Colonic mucosa (tissue), 4 donors: ENCODE measurements at regions of chr11 and their contacts with region 1.

Region 1: DNA sequence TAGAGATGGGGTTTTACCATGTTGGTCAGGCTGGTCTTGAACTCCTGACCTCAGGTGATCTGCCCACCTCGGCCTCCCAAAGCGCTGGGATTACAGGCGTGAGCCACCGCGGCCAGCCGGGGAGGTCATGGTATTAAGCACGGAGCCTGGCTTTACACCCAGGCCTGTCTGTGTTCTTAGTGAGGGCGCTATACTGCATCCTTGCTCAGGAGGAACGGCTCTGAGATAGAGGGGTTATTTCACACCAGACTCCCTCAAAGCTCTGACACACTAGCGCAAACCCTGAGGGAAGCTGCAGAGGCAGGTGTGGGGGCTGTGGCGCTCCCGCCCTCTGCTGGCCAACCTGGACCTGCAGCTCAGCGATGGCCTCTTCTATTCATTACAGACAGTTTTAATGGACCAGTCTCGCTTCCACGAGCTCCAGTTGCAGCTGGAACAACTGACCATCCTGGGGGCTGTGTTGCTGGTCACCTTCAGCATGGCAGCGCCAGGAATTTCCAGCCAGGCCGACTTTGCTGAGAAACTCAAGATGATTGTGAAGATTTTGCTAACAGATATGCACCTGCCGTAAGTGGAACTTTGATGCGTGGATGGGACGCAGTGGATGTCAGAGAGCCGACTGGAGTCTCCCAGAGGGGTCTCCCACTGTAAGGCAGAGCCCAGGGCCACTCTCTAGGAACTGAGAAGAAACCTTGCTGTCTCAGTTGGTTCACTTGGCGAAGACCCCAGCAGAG is 26.2 kb downstream of the TCP11L1 start:
- DNase-seq: peak; percentile 74
- H3K4me3 ChIP-seq: no peak overlapping the region
- H3K27ac ChIP-seq: no peak overlapping the region
- H3K4me1 ChIP-seq: peaks cover 4% of the 10 kb centered on the region
- H3K27me3 ChIP-seq: no peaks in the 10 kb centered on the region
- CTCF ChIP-seq: peak; percentile 85

Region 2: GRCh38 chr11:32817181-32817851 is 248.3 kb before region 1 on chr11:
- intact Hi-C with region 1: loop called (anchors 10 kb)
- DNase-seq: no peak
- H3K4me3 ChIP-seq: no peak overlapping the region
- H3K27ac ChIP-seq: no peak overlapping the region
- H3K4me1 ChIP-seq: no peaks in the 10 kb centered on the region
- H3K27me3 ChIP-seq: no peaks in the 10 kb centered on the region
- CTCF ChIP-seq: no peak

Region 3: DNA sequence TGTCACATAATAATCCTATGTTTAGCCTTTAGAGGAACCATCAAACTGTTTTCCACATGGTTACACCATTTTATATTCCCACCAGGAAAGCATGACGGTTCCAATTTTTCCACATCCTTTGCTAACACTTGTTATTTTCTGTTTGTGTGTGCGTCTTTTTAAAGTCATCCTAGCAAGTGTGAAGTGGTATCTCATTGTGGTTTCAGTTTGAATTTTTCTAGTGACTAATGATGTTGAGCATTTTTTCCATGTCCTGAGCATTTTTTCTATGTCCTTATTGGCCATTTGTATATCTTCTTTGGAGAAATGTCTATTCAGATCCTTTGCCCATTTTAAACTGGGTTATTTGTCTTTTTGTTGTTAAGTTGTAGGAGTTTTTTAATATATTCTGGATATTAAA is 103.6 kb before region 1 on chr11:
- intact Hi-C with region 1: loop called (anchors 2 kb)
- DNase-seq: no peak
- H3K4me3 ChIP-seq: no peak overlapping the region
- H3K27ac ChIP-seq: no peak overlapping the region
- H3K4me1 ChIP-seq: no peaks in the 10 kb centered on the region
- H3K27me3 ChIP-seq: no peaks in the 10 kb centered on the region
- CTCF ChIP-seq: no peak

Region 4: DNA sequence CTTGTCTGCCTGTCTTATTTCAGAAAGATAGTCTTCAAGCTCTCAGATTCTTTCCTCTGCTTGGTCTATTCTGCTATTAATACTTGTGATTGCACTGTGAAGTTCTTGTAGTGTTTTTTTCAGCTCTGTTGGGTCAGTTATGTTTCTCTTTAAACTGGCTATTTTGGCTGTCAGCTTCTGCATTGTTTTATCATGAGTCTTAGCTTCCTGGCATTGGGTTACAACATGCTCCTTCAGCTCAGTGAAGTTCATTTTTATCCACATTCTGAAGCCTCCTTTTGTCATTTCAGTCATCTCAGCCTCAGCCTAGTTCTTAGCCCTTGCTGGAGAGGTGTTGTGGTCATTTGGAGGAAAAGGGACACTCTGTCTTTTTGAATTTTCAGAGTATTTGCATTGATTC is 65.4 kb before region 1 on chr11:
- intact Hi-C with region 1: no loop called
- DNase-seq: no peak
- H3K4me3 ChIP-seq: no peak overlapping the region
- H3K27ac ChIP-seq: no peak overlapping the region
- H3K4me1 ChIP-seq: no peaks in the 10 kb centered on the region
- H3K27me3 ChIP-seq: no peaks in the 10 kb centered on the region
- CTCF ChIP-seq: no peak